ENCODE measurements at regions of chr2 and their contacts with region 1.

Region 1: GRCh38 chr2:84925724-84926376 is 20.4 kb downstream of the TMSB10 start:
- DNase-seq: peak; percentile 94 to 99 (median 97)
- ATAC-seq: peak; percentile 90
- H3K4me3 ChIP-seq: peak overlapping the region; percentile 77
- H3K4me3 Mint-ChIP-seq: peak overlapping the region; percentile 91 to 100 (median 94)
- H3K27ac ChIP-seq: peak overlapping the region; percentile 69
- H3K27ac Mint-ChIP-seq: peak overlapping the region; percentile 91 to 100 (median 96)
- H3K4me1 ChIP-seq: peaks cover 23 to 29% of the 10 kb centered on the region in 2 donors
- H3K4me1 Mint-ChIP-seq: peaks cover 25 to 55% (median 47%) of the 10 kb centered on the region in 7 donors
- H3K27me3 ChIP-seq: no peaks in the 10 kb centered on the region
- H3K27me3 Mint-ChIP-seq: no peaks in the 10 kb centered on the region

Region 2: GRCh38 chr2:84526562-84526961 is 399.3 kb before region 1 on chr2:
- CTCF ChIA-PET with region 1: interaction called, 24 read pairs
- POLR2A ChIA-PET with region 1: interaction called, 7 read pairs
- intact Hi-C with region 1: loop called in 1 of 2 experiments (anchors 1 kb)
- DNase-seq: peak in 3 of 9 donors; percentile 32 to 45 (median 35)
- ATAC-seq: no peak
- H3K4me3 ChIP-seq: no peak overlapping the region
- H3K4me3 Mint-ChIP-seq: peak overlapping the region in 6 of 10 donors; percentile 17 to 46 (median 30)
- H3K27ac ChIP-seq: no peak overlapping the region
- H3K27ac Mint-ChIP-seq: peak overlapping the region in 8 of 9 donors; percentile 0 to 82 (median 53)
- H3K4me1 ChIP-seq: peaks cover 0 to 9% of the 10 kb centered on the region in 2 donors
- H3K4me1 Mint-ChIP-seq: peaks cover 2 to 36% (median 28%) of the 10 kb centered on the region in 7 donors
- H3K27me3 ChIP-seq: no peaks in the 10 kb centered on the region
- H3K27me3 Mint-ChIP-seq: peaks cover 0 to 16% (median 0%) of the 10 kb centered on the region in 5 donors

Region 3: DNA sequence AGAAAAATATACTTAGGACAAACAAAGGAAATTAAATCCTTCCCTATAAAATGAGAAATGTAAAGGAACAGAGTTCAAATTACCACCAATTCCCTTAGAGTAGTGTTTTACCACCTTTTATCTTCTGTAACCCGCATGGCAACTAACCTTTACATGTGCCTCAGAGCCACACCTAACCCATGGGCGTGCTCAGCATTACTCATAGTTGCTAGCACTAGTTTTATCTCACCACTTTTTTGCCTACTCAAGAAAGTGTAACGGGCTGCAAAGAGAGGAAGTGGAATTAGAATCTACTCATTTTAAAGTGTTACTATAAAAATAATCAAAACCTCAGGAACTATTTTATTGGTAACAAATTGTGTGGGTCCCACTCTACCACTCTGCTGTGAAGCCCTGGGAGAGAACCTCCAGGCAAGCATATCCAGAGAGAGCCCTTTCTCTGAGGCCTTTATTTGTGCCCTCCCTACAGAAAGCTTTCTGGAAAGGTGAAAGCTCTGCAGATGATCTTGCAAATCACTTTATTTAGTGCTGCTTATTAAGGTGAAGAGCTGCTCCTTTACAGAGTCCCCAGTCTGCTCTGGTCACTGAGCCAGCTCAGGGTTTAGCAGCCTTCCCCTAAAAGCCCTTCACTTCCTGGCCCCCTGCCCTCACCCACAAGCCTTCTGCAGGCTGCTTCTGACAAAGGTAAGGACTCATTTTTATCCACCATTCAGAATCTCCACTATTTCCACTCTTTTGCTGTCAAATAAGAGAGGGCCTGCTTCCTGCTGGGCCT is 143.7 kb before region 1 on chr2:
- CTCF ChIA-PET with region 1: interaction called, 11 read pairs
- POLR2A ChIA-PET with region 1: interaction called, 12 read pairs
- intact Hi-C with region 1: loop called (anchors 1 kb)
- DNase-seq: peak in 8 of 9 donors; percentile 29 to 72 (median 57)
- ATAC-seq: peak; percentile 87
- H3K4me3 ChIP-seq: peak overlapping the region; percentile 18
- H3K4me3 Mint-ChIP-seq: peak overlapping the region in 9 of 10 donors; percentile 54 to 85 (median 73)
- H3K27ac ChIP-seq: peak overlapping the region; percentile 64
- H3K27ac Mint-ChIP-seq: peak overlapping the region; percentile 84 to 96 (median 91)
- H3K4me1 ChIP-seq: peaks cover 52 to 75% of the 10 kb centered on the region in 2 donors
- H3K4me1 Mint-ChIP-seq: peaks cover 50 to 92% (median 87%) of the 10 kb centered on the region in 7 donors
- H3K27me3 ChIP-seq: no peaks in the 10 kb centered on the region
- H3K27me3 Mint-ChIP-seq: no peaks in the 10 kb centered on the region

Region 4: DNA sequence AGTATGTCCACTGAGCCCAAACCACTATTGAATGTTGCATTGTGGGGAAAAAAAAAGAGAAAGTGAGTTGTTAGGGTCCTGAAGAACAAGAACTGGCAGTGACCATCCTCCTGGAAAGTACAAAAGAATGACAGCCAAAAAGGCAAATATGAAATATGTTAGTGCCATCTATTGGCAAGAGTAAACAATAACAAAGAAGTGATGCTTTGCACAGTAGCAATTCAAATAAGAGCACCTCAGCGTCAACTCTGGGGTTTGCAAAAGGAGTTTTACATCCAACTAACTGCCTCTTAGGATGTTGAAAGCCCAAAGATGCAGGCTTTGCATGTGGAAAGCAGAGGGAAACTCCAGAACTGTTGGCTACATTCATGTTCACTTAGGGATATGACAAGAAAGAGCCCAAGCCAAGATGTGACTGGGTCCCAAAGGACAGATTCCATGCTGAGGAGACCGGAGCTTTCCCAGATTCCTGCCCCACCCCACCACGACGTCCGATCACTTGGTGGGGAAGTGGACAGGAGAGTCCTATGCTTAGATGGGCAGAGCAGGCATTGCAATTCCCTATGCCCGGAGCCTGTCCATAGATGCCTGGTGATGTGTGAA is 60.6 kb before region 1 on chr2:
- CTCF ChIA-PET with region 1: interaction called, 22 read pairs
- POLR2A ChIA-PET with region 1: interaction called, 9 read pairs
- intact Hi-C with region 1: loop called (anchors 1 kb)
- DNase-seq: peak in 5 of 9 donors; percentile 43 to 67 (median 53)
- ATAC-seq: peak; percentile 72
- H3K4me3 ChIP-seq: no peak overlapping the region
- H3K4me3 Mint-ChIP-seq: peak overlapping the region; percentile 32 to 89 (median 74)
- H3K27ac ChIP-seq: peak overlapping the region; percentile 73
- H3K27ac Mint-ChIP-seq: peak overlapping the region; percentile 70 to 99 (median 96)
- H3K4me1 ChIP-seq: peaks cover 12 to 74% of the 10 kb centered on the region in 2 donors
- H3K4me1 Mint-ChIP-seq: peaks cover 51 to 97% (median 91%) of the 10 kb centered on the region in 7 donors
- H3K27me3 ChIP-seq: no peaks in the 10 kb centered on the region
- H3K27me3 Mint-ChIP-seq: no peaks in the 10 kb centered on the region

Region 5: GRCh38 chr2:84905181-84906107 is 20.4 kb before region 1 on chr2 and contains the start of gene TMSB10:
- CTCF ChIA-PET with region 1: interaction called, 87 read pairs
- POLR2A ChIA-PET with region 1: interaction called, 495 read pairs
- intact Hi-C with region 1: loop called (anchors 1 kb)
- DNase-seq: peak; percentile 87 to 98 (median 94)
- ATAC-seq: peak; percentile 88
- H3K4me3 ChIP-seq: peak within 1 kb of the TSS; percentile 89
- H3K4me3 Mint-ChIP-seq: peak within 1 kb of the TSS; percentile 90 to 98 (median 95)
- H3K27ac ChIP-seq: peak within 1 kb of the TSS; percentile 81
- H3K27ac Mint-ChIP-seq: peak within 1 kb of the TSS; percentile 89 to 99 (median 96)
- H3K4me1 ChIP-seq: peaks cover 30 to 34% of the 10 kb centered on the region in 2 donors
- H3K4me1 Mint-ChIP-seq: peaks cover 39 to 73% (median 67%) of the 10 kb centered on the region in 7 donors
- H3K27me3 ChIP-seq: no peaks in the 10 kb centered on the region
- H3K27me3 Mint-ChIP-seq: peaks cover 0 to 2% (median 0%) of the 10 kb centered on the region in 5 donors
- total RNA-seq, gene TMSB10: 1,492 to 5,756 (median 1,578) TPM

Region 6: DNA sequence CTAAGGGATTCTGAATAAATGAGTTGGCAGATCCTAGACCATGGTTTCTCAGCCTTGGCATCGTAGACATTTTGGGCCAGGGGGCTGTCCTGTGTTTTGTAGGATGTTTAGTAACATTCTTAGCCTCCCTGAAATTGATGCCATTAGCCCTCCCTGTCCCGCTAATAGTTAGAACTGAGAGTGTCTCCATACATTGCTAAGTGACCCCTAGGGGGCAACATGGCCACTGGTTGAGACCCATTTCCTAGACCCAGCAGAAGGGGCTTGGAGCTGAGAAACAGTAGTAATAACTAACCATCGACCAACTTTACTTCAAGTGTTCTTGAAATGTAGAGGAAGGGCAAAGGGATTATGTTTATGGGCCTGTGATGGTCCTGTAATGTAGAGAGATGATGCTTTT is 85.9 kb after region 1 on chr2:
- CTCF ChIA-PET with region 1: interaction called, 49 read pairs
- POLR2A ChIA-PET with region 1: interaction called, 12 read pairs
- intact Hi-C with region 1: loop called (anchors 1 kb)
- DNase-seq: no peak
- ATAC-seq: no peak
- H3K4me3 ChIP-seq: no peak overlapping the region
- H3K4me3 Mint-ChIP-seq: peak overlapping the region in 7 of 10 donors; percentile 18 to 40 (median 35)
- H3K27ac ChIP-seq: peak overlapping the region; percentile 15
- H3K27ac Mint-ChIP-seq: peak overlapping the region; percentile 26 to 92 (median 56)
- H3K4me1 ChIP-seq: peaks cover 3 to 25% of the 10 kb centered on the region in 2 donors
- H3K4me1 Mint-ChIP-seq: peaks cover 65 to 86% (median 78%) of the 10 kb centered on the region in 7 donors
- H3K27me3 ChIP-seq: no peaks in the 10 kb centered on the region
- H3K27me3 Mint-ChIP-seq: no peaks in the 10 kb centered on the region

Measured in naive thymus-derived CD4-positive, alpha-beta T cell (primary cell).